PC-3 (cell line): ENCODE measurements at regions of chr11 and their contacts with region 1.

Region 1: DNA sequence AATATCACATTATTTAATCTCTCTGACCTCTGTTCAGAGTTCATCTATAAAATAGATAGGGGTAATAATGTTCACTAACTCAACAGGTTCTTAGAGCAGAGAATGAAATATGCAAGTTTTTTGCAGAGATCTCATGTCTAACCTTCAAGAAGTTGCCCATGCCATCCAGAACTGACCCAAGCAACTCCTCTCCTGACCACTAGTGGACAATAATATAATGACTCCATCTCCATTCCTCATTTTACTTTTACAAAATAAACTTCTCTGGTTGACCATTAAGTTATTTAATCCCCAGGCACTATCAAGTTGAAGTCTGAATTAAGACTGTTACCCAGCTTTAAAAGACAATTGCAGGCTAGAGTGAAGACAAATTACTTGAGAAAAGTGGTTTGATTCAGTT is 382.6 kb downstream of the KCNA4 start:
- DNase-seq: peak; percentile 23
- ATAC-seq: peak; percentile 33; the same call in 1 of the 2 replicates
- H3K4me3 ChIP-seq: no peak overlapping the region
- H3K27ac ChIP-seq: no peak overlapping the region
- H3K4me1 ChIP-seq: no peaks in the 10 kb centered on the region
- H3K27me3 ChIP-seq: no peaks in the 10 kb centered on the region
- CTCF ChIP-seq: peak; percentile 51; the same call in 1 of the 2 replicates

Region 2: GRCh38 chr11:29448246-29448877 is 185.9 kb before region 1 on chr11:
- CTCF ChIA-PET with region 1: no interaction called
- POLR2A ChIA-PET with region 1: no interaction called
- intact Hi-C with region 1: loop called (anchors 1 kb)
- DNase-seq: peak; percentile 27
- ATAC-seq: peak; percentile 28; the same call in 1 of the 2 replicates
- H3K4me3 ChIP-seq: no peak overlapping the region
- H3K27ac ChIP-seq: no peak overlapping the region
- H3K4me1 ChIP-seq: peaks cover 15% of the 10 kb centered on the region
- H3K27me3 ChIP-seq: no peaks in the 10 kb centered on the region
- CTCF ChIP-seq: peak; percentile 44

Region 3: DNA sequence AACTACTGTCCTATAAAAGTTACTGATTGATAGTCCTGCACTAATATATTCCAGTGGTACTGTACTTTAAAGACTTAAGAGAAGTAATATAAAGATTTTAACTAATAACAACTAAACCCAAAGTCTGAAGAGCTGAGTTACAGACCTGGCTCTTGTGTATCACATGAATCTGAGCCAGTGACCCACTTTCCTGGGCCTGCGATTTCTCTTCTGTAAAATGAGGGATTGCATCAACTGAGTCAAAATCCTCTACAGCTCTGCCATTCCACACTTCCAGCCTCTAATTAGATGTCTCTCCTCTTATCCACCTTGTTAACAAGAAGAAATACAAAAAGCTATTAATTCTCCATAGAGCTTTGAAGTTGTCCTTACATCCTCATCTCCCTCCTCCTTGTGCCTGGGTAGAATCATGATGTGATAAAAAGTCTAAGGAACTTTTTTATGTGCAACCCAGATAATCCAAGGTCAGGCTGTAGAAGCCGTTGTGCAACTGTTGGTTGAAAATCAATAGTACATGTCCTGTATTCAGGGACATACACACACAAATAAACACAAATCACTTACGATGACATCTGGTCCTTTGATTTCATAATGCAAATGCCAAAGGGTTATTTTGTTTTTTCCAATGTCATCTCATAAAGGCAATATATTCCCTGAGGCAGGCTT is 27.8 kb before region 1 on chr11:
- CTCF ChIA-PET with region 1: no interaction called
- POLR2A ChIA-PET with region 1: no interaction called
- intact Hi-C with region 1: no loop called
- DNase-seq: no peak
- ATAC-seq: no peak
- H3K4me3 ChIP-seq: no peak overlapping the region
- H3K27ac ChIP-seq: no peak overlapping the region
- H3K4me1 ChIP-seq: no peaks in the 10 kb centered on the region
- H3K27me3 ChIP-seq: no peaks in the 10 kb centered on the region; the same call in 1 of the 2 replicates
- CTCF ChIP-seq: no peak